RWPE1 (cell line): ENCODE measurements at regions of chr7 and their contacts with region 1.

Region 1: GRCh38 chr7:100763556-100764140 is 30.3 kb downstream of the ZAN start:
- DNase-seq: peak; percentile 49
- H3K27ac ChIP-seq: peak overlapping the region; percentile 48
- CTCF ChIP-seq: no peak

Region 2: GRCh38 chr7:100342765-100343164 is 420.9 kb before region 1 on chr7:
- CTCF ChIA-PET with region 1: no interaction called
- POLR2A ChIA-PET with region 1: interaction called, 13 read pairs
- DNase-seq: no peak
- H3K27ac ChIP-seq: 0 out of 2 replicates have a peak overlapping the region, but pooled peaks have one; percentile 33
- CTCF ChIP-seq: no peak